SK-N-SH (cell line): ENCODE measurements at regions of chr6 and their contacts with region 1.

Region 1: DNA sequence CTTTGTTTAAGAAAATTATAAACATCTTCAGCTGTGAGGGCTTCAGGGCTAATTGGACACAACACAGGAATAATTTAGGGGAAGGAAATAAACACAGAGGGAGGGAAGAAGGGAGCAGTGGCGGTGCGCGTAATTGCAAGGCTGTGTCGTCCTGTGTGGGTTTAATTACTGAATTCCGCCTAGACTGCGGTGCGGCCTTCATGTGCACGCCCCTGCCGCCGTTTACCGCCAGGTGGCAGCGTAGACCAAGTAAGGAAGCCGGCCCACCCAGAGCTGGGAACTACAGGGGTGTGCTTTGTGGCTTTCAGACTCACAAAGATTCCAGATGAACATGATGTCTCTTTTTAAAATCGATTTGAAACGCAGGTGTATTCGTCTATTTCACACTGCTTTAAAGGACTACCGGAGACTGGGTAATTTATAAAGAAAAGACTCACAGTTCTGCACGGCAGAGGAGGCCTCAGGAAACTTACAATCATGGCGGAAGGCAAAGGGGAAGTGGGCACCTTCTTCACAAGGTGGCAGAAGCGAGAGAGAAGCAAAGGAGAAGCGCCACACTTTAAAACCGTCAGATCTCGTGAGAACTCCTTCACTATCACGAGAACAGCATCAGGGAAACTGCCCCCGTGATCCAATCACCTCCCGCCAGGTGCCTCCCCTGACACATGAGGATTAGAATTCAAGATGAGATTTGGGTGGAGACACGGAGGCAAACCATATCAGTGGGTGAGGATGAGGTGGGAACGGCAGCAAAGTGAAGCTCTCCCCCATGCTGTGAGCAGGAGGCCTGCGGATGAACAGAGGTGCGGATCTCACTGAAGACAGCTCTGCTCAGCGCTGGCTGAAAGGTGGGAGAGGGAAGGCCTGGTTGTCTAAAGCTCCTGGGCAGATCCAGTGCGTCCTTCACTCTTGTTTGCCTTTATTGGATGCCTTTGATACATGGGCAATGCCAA is 222.0 kb upstream of the PDE10A start:
- DNase-seq: peak; percentile 82
- H3K4me3 ChIP-seq: no peak overlapping the region; a peak in 1 of 4 replicates
- H3K27ac ChIP-seq: no peak overlapping the region
- H3K4me1 ChIP-seq: peaks cover 0 to 3% of the 10 kb centered on the region in 2 experiments; a peak in 1 of 4 replicates
- H3K27me3 ChIP-seq: no peaks in the 10 kb centered on the region
- CTCF ChIP-seq: peak; percentile 49
- EP300 ChIP-seq: no peak
- RAD21 ChIP-seq: peak; percentile 88

Region 2: GRCh38 chr6:165811512-165811911 is 73.6 kb before region 1 on chr6:
- CTCF ChIA-PET with region 1: no interaction called
- POLR2A ChIA-PET with region 1: no interaction called
- DNase-seq: no peak
- H3K4me3 ChIP-seq: no peak overlapping the region
- H3K27ac ChIP-seq: no peak overlapping the region
- H3K4me1 ChIP-seq: no peaks in the 10 kb centered on the region
- H3K27me3 ChIP-seq: no peaks in the 10 kb centered on the region
- CTCF ChIP-seq: no peak
- EP300 ChIP-seq: no peak
- RAD21 ChIP-seq: no peak

Region 3: GRCh38 chr6:165858586-165858985 is 26.5 kb before region 1 on chr6:
- CTCF ChIA-PET with region 1: interaction called, 15 read pairs
- POLR2A ChIA-PET with region 1: no interaction called
- DNase-seq: no peak
- H3K4me3 ChIP-seq: no peak overlapping the region
- H3K27ac ChIP-seq: no peak overlapping the region
- H3K4me1 ChIP-seq: no peaks in the 10 kb centered on the region
- H3K27me3 ChIP-seq: no peaks in the 10 kb centered on the region
- CTCF ChIP-seq: no peak
- EP300 ChIP-seq: no peak
- RAD21 ChIP-seq: no peak

Region 4: DNA sequence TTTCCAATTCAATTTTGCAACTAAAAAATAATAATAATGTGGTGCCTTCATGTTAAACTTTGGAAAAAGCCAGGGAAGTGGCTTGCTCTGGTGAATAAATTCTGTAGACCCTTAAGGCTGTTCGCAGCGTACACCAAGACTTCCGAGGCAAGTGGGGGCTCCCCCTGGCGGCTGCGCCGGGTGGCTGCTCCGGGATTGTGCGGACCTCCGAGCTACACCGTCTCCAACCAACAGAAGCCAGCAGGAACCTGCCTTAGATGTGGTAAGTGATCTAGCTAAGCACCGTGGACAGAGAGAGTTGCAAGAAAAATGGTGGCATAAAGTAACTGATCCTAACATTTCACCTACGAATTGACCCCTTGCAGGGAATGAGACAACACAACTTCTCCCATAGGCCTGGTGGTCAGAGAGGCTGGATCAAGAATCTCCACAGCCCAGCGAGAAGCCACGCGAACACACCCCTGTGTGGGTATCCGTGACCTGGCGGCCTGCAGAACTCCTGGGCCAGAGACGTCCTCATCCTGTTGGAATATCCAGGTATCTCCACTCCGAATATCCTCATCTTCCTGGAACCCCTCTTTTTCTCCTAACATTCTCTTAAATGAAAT is 212.9 kb after region 1 on chr6:
- CTCF ChIA-PET with region 1: interaction called, 341 read pairs
- POLR2A ChIA-PET with region 1: no interaction called
- DNase-seq: peak; percentile 79
- H3K4me3 ChIP-seq: peak overlapping the region in 1 of 2 experiments; percentile 55; a peak in 2 of 4 replicates
- H3K27ac ChIP-seq: no peak overlapping the region
- H3K4me1 ChIP-seq: peaks cover 0 to 2% of the 10 kb centered on the region in 2 experiments; a peak in 1 of 4 replicates
- H3K27me3 ChIP-seq: no peaks in the 10 kb centered on the region
- CTCF ChIP-seq: peak; percentile 51
- EP300 ChIP-seq: no peak
- RAD21 ChIP-seq: peak; percentile 75

Region 5: GRCh38 chr6:166106076-166106686 is 221.1 kb after region 1 on chr6:
- CTCF ChIA-PET with region 1: interaction called, 341 read pairs
- POLR2A ChIA-PET with region 1: interaction called, 3 read pairs
- DNase-seq: peak; percentile 62
- H3K4me3 ChIP-seq: no peak overlapping the region; a peak in 1 of 4 replicates
- H3K27ac ChIP-seq: no peak overlapping the region
- H3K4me1 ChIP-seq: no peaks in the 10 kb centered on the region; a peak in 1 of 4 replicates
- H3K27me3 ChIP-seq: no peaks in the 10 kb centered on the region
- CTCF ChIP-seq: peak; percentile 75
- EP300 ChIP-seq: no peak
- RAD21 ChIP-seq: peak; percentile 96

Region 6: DNA sequence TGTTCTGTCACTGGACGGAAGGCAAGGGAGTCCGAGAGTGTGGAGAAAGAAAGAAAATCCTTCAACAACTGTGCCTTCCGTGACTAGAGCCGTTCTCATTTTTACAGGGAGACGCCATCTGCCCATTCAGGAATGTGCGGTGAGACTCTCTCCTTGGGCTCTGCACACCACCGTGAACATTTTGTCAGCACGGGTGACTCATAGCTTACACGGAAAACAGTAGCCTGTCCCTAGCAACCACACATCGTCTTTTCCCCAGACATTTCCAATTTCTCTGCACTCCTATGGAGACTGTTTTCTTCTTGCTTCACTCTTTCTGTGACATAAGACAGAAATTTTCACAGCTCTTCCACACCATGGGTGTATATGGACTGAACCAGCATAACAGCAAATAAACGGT is 227.5 kb after region 1 on chr6:
- CTCF ChIA-PET with region 1: interaction called, 341 read pairs
- POLR2A ChIA-PET with region 1: no interaction called
- DNase-seq: no peak
- H3K4me3 ChIP-seq: no peak overlapping the region
- H3K27ac ChIP-seq: no peak overlapping the region
- H3K4me1 ChIP-seq: no peaks in the 10 kb centered on the region
- H3K27me3 ChIP-seq: no peaks in the 10 kb centered on the region
- CTCF ChIP-seq: no peak
- EP300 ChIP-seq: no peak
- RAD21 ChIP-seq: no peak